Activated T-helper 1 cell treated with anti-CD3 and anti-CD28 coated beads, Interleukin-12 subunit alpha, Interleukin-12 subunit beta, Interleukin-2, Interleukin-4 antibody, amounts not matched to agents 30 ng/mL and 10 ng/mL and 1 ng/mL, durations not matched to agents 14 hours and 24 hours and 36 hours (primary cell): ENCODE measurements at regions of chrX and their contacts with region 1.

Region 1: DNA sequence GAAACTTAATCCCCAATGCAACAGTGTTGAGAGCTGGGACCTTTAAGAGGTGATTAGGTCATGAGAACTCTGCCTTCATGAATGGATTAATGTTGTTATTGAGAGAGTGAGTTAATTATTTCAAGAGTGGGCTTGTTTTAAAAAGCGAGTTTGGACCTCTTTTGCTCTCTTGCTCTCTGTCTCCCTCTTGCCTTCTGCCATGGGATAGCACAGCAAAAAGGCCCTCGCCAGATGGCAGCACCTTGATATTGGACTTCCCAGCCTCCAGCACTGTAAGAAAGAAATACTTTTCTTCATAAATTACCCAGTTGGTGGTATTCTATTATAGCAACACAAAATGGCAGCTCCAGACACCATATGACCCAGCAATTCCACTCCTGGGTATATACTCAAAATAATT is 7.0 kb upstream of the ATP6AP2 start:
- DNase-seq: peak; percentile 12
- H3K4me3 Mint-ChIP-seq: no peak overlapping the region
- H3K27ac Mint-ChIP-seq: no peak overlapping the region
- H3K4me1 Mint-ChIP-seq: peaks cover 18% of the 10 kb centered on the region
- H3K27me3 Mint-ChIP-seq: no peaks in the 10 kb centered on the region

Region 2: DNA sequence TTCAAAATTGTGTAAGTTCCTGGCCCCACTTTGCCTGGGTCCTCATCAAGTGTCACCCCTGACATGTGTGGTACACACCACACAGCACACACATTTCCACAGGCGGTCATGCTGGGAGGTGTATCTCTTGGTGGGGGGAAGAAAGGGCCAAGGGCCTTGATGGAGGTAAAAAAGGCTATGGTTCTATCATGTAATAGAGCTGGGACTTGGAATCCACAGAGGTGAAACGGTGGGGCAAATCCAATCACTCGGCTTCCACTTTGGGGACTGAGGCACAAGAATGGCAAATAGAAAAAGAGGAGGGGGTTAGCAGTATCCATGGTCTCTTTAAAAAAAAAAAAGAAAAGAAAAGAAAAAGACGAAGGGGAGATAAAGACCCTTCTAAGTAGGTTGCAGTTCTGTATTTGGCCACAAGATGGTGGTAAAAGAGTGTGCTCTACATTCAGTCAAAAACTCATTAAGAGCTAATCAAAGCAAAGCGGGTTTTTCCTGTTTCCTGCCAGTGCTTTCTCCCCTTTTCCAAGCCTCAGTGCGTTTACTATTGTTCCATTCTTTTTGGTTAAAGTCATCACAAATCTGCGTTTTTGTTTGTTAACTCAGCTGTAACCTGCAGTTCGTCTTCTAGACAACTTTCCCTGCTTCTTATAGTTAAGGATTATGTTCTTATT is 30.0 kb before region 1 on chrX:
- intact Hi-C with region 1: loop called (anchors 1 kb)
- DNase-seq: no peak
- H3K4me3 Mint-ChIP-seq: no peak overlapping the region
- H3K27ac Mint-ChIP-seq: no peak overlapping the region
- H3K4me1 Mint-ChIP-seq: peaks cover 21% of the 10 kb centered on the region
- H3K27me3 Mint-ChIP-seq: peaks cover 6% of the 10 kb centered on the region

Region 3: DNA sequence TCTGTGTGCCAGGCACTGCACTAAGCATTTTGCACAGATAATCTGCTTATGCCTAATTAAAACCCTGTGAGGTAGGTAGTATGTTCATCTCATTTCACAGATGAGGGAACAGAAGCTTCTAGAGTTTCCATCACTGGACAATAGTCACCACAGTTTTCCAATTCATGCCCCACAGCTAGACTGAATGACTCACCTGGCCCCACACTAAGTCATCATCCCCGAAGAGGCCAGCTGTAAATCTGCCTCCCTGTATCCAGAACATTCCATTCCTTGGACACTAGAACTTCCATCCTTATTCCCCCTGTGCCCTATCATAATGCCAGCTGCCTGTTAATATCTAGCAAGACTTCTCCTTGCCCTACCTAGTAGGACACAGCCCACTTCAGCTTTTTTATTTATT is 832.4 kb after region 1 on chrX:
- intact Hi-C with region 1: no loop called
- DNase-seq: no peak
- H3K4me3 Mint-ChIP-seq: no peak overlapping the region
- H3K27ac Mint-ChIP-seq: no peak overlapping the region
- H3K4me1 Mint-ChIP-seq: no peaks in the 10 kb centered on the region
- H3K27me3 Mint-ChIP-seq: peaks cover 4% of the 10 kb centered on the region